Activated B cell treated with CpG ODN at 0.5 μM for 24 hours (primary cell): ENCODE measurements at regions of chr2 and their contacts with region 1.

Region 1: GRCh38 chr2:126634273-126634861 is 21.6 kb upstream of the GYPC start:
- DNase-seq: no peak
- ATAC-seq: no peak
- H3K4me3 Mint-ChIP-seq: no peak overlapping the region
- H3K27ac Mint-ChIP-seq: no peak overlapping the region
- H3K4me1 Mint-ChIP-seq: peaks cover 16% of the 10 kb centered on the region
- H3K27me3 Mint-ChIP-seq: peaks cover 6% of the 10 kb centered on the region
- CTCF ChIP-seq: no peak

Region 2: DNA sequence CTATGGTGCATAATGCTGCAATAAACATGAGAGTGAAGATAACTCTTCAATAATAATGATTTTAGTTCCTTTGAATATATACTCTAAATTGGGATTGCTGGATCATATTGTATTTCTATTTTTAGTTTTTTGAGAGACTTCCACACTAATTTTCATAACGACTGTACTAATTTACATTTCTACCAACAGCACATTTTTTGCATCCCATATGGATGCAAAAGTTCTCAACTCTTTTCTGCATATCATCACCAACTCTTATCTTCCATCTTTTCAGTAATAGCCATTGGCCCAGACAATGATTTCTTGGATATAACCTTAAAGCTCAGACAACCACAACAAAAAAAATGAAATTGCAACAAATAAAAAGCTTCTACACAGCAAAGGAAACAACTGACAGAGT is 1526.9 kb before region 1 on chr2:
- CTCF ChIA-PET with region 1: no interaction called
- POLR2A ChIA-PET with region 1: no interaction called
- intact Hi-C with region 1: no loop called
- DNase-seq: no peak
- ATAC-seq: no peak
- H3K4me3 Mint-ChIP-seq: no peak overlapping the region
- H3K27ac Mint-ChIP-seq: no peak overlapping the region
- H3K4me1 Mint-ChIP-seq: no peaks in the 10 kb centered on the region
- H3K27me3 Mint-ChIP-seq: no peaks in the 10 kb centered on the region
- CTCF ChIP-seq: no peak

Region 3: DNA sequence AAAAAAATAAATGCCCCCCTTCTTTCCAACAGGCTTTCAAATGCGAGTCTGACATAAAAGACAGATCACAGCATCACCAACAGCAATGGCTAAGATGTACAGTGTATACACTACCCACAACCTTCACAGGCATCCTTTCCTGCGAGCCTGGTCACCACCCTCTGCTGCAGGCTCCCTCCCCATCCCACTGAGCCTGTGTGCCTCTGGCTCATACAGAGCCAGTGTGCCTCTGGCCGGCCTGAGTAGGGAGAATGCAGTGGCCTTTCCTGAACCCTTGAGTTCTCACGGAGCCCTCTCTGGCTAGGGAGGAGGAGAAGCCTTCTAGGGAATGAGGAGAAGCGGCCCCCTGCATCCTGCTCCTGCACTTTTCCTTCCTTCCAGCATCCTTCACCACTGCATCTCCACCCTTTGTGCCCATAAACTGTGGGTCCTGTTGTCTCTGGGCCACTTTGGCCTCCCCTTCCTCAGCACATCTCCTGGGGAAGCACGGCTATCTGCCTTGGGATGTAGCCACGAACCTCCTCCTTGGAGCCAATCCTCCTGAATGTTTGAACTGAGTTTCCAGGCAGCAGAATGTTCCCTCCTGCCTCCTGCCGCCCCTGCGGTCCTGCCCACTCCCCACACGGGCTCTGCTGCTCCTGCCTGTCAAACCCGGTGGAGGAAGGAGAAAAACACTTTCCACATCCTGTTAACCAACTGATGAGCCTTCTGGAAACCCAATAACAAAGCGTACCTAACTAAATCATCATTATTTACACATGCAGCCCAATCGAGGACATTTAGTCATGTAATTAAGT is 44.1 kb after region 1 on chr2:
- CTCF ChIA-PET with region 1: no interaction called
- POLR2A ChIA-PET with region 1: no interaction called
- intact Hi-C with region 1: loop called (anchors 5 kb)
- DNase-seq: no peak
- ATAC-seq: no peak
- H3K4me3 Mint-ChIP-seq: no peak overlapping the region
- H3K27ac Mint-ChIP-seq: no peak overlapping the region
- H3K4me1 Mint-ChIP-seq: peaks cover 7% of the 10 kb centered on the region
- H3K27me3 Mint-ChIP-seq: no peaks in the 10 kb centered on the region
- CTCF ChIP-seq: no peak